A673 (cell line): ENCODE measurements at regions of chr9 and their contacts with region 1.

Region 1: DNA sequence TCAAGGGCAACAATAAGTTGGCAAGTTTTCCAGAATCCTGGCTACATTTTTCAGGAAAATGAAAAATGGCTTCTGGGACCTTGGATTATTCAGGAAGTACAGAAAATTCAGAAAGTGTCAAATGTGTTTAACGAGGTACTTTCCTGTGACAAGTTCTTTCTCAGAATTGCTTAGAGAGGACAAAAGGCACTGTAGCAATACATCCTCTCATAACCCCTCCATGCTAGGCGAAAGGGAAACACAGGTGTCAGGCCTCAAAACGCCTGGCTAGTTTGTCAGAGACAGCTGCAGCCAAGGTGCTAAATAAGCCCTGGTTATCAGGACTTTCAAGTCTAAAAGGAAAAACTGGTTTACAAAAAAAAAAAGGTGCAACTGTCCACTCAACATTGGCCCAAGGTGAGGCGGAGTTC is 115.2 kb downstream of the GNAQ start:
- DNase-seq: no peak
- H3K4me3 ChIP-seq: no peak overlapping the region
- H3K27ac ChIP-seq: no peak overlapping the region
- H3K4me1 ChIP-seq: peaks cover 32% of the 10 kb centered on the region
- H3K27me3 ChIP-seq: no peaks in the 10 kb centered on the region
- CTCF ChIP-seq: no peak

Region 2: DNA sequence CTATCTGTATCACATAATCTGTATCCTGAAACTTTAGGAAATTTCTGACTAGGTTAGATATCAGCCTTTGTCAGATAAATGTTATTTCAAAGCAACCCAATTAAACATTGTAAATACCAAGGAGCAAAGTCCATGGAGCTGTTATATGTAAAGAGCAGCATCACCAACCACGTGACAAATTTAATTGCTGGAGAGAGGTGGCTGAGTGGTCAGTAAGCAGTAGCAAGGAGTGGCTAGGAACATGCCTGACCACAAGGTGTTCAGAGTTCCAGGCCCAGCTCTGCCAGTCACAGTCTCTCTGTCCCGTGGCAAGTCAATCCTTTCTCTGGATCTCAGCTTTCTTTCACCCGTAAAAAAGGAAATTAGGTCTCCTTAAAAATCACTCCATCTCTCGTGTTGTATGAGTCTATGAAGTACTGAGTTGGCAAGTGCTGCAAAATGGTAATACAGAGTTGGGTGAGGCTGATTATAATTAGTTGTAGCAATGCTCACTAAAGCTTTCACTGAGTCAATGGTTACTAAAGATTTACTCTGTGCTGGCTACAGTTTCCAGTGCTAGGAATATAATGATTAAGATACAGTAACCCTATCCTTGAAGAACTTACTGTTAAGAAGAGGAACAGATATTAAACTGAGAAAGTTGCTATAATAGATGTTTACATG is 50.9 kb before region 1 on chr9:
- CTCF ChIA-PET with region 1: no interaction called
- POLR2A ChIA-PET with region 1: interaction called, 24 read pairs
- intact Hi-C with region 1: no loop called
- DNase-seq: no peak
- H3K4me3 ChIP-seq: no peak overlapping the region
- H3K27ac ChIP-seq: no peak overlapping the region
- H3K4me1 ChIP-seq: no peaks in the 10 kb centered on the region
- H3K27me3 ChIP-seq: no peaks in the 10 kb centered on the region
- CTCF ChIP-seq: no peak

Region 3: DNA sequence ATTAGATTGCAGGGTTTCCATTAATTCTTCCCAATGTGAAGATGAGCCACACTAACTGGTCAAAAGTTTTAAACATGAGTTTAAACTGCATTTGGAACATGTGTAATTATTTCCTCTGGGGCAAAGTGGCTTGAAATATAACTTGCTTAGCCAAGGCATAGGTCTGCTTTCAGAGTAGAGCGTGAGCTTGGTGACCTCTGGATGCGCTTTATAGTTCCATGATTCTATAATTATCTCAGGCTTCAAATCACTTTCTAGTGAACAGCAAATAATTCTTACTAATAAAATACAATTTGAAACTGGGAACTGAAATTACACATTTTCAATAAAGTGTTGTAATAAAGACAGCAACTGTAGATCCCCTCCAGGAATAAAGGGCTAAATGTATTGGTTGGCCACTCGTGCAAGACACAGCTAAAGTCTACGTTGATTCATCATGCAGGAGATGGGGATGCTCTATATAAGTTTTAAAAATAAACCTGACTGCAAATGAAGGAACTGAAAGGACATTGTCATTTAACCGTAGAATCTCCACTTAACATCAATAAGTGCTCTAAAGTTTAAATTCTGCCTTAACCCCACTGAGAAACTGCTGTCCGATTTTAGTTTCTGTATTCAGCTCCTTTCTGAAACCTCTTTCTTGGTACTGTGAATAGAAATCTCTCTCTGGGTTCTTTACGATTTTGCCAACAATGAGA is 840.5 kb after region 1 on chr9:
- CTCF ChIA-PET with region 1: no interaction called
- POLR2A ChIA-PET with region 1: no interaction called
- intact Hi-C with region 1: no loop called
- DNase-seq: no peak
- H3K4me3 ChIP-seq: no peak overlapping the region
- H3K27ac ChIP-seq: no peak overlapping the region
- H3K4me1 ChIP-seq: no peaks in the 10 kb centered on the region
- H3K27me3 ChIP-seq: peaks cover 13% of the 10 kb centered on the region
- CTCF ChIP-seq: no peak